Activated T-helper 2 cell treated with anti-CD3 and anti-CD28 coated beads, Interferon-gamma antibody, Interleukin-2, Interleukin-4, amounts not matched to agents 10 μg/mL and 5 μg/mL and 100 μg/mL, durations not matched to agents 14 hours and 24 hours and 36 hours (primary cell): ENCODE measurements at regions of chr6 and their contacts with region 1.

Region 1: DNA sequence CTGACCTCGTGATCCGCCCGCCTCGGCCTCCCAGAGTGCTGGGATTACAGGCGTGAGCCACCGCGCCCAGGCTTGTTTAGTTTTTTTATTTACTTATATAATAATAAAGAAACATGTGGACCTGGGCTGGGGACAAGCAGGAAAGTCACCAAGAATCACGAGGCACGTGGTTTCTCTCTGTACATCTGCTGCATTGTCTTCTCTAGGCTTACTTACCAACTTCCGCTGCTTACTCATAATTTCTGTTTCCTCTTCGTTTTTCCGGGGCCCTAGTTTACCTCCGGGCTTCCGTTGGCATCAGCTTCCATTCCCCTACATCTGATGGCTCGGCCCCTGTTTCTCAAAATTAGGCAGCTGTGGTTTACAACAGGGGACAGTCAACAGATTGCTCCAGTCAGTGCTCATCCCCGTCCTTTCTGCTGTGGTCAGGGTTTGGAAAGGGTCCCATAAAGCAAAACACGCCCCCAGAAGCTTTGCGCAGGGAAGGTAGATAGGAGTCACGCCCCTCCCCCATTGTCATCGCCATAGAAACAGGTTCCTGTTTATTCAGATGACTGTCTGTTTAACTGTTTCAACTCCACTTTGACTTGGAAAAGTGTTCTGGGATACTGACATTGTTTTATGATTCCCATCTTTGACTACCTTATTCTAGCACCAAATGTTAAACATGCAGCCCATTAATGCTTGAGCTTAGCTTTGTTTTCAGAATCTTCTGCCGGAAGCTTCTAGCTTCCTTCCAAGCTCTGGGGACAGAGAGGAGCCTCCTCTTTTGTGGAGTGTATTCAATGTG is 31.9 kb upstream of the TXLNB start:
- DNase-seq: peak; percentile 71
- H3K4me3 Mint-ChIP-seq: peak overlapping the region; percentile 69
- H3K27ac Mint-ChIP-seq: peak overlapping the region; percentile 95
- H3K4me1 Mint-ChIP-seq: peaks cover 19% of the 10 kb centered on the region
- H3K27me3 Mint-ChIP-seq: no peaks in the 10 kb centered on the region

Region 2: GRCh38 chr6:139308286-139308916 is 15.3 kb before region 1 on chr6:
- intact Hi-C with region 1: loop called (anchors 1 kb)
- DNase-seq: no peak
- H3K4me3 Mint-ChIP-seq: no peak overlapping the region
- H3K27ac Mint-ChIP-seq: peak overlapping the region; percentile 84
- H3K4me1 Mint-ChIP-seq: peaks cover 24% of the 10 kb centered on the region
- H3K27me3 Mint-ChIP-seq: no peaks in the 10 kb centered on the region